ENCODE measurements at regions of chr10 and their contacts with region 1.

Region 1: DNA sequence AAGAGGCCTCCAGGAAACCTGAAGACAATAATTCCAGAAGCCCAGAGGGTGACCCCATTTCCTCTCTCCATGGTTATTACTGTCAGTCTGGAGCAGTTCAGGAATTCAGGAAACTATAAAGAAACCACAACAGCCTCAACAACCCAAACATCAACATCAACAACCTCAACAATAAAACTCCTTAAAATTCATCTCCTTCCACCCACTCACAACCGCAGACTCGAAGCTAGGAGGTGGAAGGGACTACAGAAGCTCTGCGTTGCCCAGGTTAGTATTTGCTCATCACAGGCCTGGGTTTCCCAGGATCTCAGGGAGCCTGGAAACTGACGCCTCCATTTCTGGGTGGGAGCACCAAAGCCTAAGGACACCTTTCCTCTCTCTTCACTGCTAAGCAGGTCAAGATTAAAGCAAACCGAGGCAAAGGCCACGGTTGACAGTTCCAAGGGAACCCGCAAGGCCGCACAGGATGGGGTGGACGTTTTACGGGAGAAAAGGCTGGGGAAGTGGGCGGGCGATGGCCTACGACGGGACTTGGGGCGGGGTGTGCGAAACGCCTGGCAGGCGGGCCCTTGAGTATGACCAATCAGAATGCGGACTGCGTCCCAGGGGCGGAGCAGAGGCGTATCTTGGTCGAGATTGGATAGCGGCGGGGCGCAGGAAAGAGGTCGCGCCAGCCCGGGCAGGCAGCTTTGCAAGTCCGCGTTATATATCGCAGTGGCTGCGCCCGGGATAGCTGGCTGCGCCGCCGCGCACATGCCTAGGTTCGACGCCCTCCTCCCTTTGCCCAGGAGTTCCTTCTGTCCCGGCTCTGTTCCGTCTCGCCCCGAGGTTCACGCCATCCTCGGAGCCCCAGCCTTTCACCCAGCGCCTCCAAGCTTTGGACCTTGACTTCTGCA is at the start of gene ELOVL3:
- DNase-seq: peak; percentile 91
- ATAC-seq: peak; percentile 96
- H3K4me3 Mint-ChIP-seq: peak within 1 kb of the TSS; percentile 32
- H3K27ac Mint-ChIP-seq: no peak within 1 kb of the TSS
- H3K4me1 Mint-ChIP-seq: peaks cover 24% of the 10 kb centered on the region
- H3K27me3 Mint-ChIP-seq: peaks cover 56% of the 10 kb centered on the region
- total RNA-seq, gene ELOVL3: not detected

Region 2: GRCh38 chr10:102114861-102115618 is 110.9 kb before region 1 on chr10:
- CTCF ChIA-PET with region 1: no interaction called
- POLR2A ChIA-PET with region 1: no interaction called
- DNase-seq: peak; percentile 91
- ATAC-seq: peak; percentile 75
- H3K4me3 Mint-ChIP-seq: peak overlapping the region; percentile 91
- H3K27ac Mint-ChIP-seq: peak overlapping the region; percentile 93
- H3K4me1 Mint-ChIP-seq: peaks cover 63% of the 10 kb centered on the region
- H3K27me3 Mint-ChIP-seq: no peaks in the 10 kb centered on the region

Region 3: DNA sequence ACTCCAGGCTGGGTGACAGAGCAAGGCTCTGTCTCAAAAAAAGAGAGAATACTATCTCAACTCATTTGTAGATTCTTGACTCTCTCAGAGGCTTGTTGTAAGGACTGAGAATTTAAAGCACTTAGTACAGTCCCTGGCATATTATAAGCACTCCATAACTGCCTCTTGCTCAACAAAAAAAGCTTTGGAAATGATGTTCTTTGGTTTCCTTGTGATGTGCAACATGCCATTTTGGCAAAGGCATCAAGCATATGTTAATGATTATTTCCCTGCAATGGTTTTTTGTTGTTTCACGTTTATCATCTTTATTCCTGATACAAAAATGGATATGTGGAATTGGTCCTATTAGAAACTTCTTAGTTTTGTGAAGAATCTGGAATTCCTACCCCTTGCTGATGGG is 58.0 kb before region 1 on chr10:
- CTCF ChIA-PET with region 1: interaction called, 105 read pairs
- POLR2A ChIA-PET with region 1: interaction called, 3 read pairs
- DNase-seq: no peak
- ATAC-seq: no peak
- H3K4me3 Mint-ChIP-seq: no peak overlapping the region
- H3K27ac Mint-ChIP-seq: no peak overlapping the region
- H3K4me1 Mint-ChIP-seq: peaks cover 12% of the 10 kb centered on the region
- H3K27me3 Mint-ChIP-seq: no peaks in the 10 kb centered on the region

Region 4: DNA sequence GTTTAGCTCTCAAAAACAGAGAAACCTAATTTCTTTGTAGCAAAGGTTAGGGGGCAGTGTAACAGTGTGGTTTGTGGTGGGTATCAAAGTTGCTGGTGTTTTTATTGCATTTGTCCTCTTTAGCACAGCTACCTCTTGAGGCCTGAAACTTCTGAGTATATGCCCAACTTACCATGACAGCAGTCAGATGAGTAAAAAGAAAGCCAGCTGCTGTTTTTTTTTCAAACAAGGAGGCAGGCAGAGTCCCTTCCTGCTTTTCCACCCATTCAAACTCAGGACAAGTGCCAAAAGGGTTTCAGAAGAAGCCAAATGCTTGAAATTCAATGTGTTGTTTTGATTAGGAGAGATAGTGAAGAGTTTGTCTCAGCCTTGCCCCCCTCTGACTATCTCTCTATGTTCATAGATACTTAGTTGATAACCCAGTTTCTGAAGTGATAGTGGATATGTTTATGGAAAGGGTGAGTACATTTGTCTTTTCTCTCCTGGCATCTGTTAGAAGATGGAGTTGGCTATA is 42.5 kb after region 1 on chr10:
- CTCF ChIA-PET with region 1: interaction called, 52 read pairs
- POLR2A ChIA-PET with region 1: no interaction called
- DNase-seq: no peak
- ATAC-seq: peak; percentile 39
- H3K4me3 Mint-ChIP-seq: no peak overlapping the region
- H3K27ac Mint-ChIP-seq: peak overlapping the region; percentile 19
- H3K4me1 Mint-ChIP-seq: peaks cover 44% of the 10 kb centered on the region
- H3K27me3 Mint-ChIP-seq: no peaks in the 10 kb centered on the region

Region 5: GRCh38 chr10:102342958-102343357 is 117.1 kb after region 1 on chr10:
- CTCF ChIA-PET with region 1: interaction called, 742 read pairs
- POLR2A ChIA-PET with region 1: no interaction called
- DNase-seq: no peak
- ATAC-seq: no peak
- H3K4me3 Mint-ChIP-seq: no peak overlapping the region
- H3K27ac Mint-ChIP-seq: no peak overlapping the region
- H3K4me1 Mint-ChIP-seq: peaks cover 4% of the 10 kb centered on the region
- H3K27me3 Mint-ChIP-seq: no peaks in the 10 kb centered on the region

Region 6: DNA sequence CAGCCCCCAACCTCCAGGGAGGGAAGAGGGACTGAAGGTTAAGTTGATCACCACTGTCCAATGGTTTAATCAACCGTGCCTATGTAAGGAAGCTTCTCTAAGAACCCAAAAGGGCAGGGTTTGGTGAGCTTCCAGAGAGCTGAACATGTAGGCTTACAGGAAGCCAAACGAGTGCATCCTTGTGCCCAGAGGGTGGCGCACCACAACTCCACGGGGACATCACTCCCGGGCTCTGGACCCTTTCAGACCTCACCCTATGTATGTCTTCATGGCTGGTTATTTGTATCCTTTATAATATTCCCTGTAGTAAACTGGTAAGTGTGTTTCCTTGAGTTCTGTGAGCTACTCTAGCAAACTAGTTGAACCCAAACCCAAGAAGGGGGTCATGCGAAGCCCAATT is 158.2 kb after region 1 on chr10:
- CTCF ChIA-PET with region 1: interaction called, 36 read pairs
- POLR2A ChIA-PET with region 1: no interaction called
- DNase-seq: no peak
- ATAC-seq: no peak
- H3K4me3 Mint-ChIP-seq: no peak overlapping the region
- H3K27ac Mint-ChIP-seq: no peak overlapping the region
- H3K4me1 Mint-ChIP-seq: no peaks in the 10 kb centered on the region
- H3K27me3 Mint-ChIP-seq: no peaks in the 10 kb centered on the region

Region 7: DNA sequence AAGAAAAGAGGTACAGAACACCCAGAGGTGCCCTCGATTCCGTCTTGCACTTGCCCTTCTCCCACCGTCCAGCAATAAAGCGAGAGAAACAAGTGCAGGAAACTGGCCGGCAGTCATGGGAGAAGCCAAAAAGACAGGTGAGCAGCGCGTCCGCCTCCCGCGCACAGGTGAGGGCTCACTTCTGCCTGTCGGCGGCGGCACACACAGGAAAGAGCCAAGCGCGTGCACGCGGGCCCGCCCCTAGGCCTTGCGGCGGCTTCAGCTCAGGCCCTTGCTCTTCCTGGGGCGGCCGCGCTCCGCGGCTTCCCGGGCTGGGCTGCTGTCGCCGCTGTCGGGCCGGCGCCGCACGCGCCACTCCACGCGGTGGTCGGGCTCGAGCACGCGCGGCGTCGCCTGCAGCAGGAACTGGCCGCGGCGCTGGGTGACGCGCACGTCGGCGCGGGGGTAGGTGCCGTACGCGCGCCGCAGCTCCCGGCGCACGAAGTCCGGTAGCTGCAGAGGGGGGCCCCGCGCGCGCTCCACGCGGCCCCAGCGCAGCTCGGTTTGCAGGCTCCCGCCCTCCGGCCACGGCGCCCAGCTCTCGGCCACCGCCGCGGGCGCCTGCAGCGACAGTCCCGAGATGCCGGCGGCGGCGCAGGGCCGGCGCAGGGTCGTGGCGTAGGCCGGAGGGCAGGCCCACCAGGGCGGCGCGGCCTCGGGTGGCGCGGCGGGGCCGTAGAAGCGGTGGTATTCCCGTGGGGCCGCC is 224.5 kb after region 1 on chr10:
- CTCF ChIA-PET with region 1: interaction called, 14 read pairs
- POLR2A ChIA-PET with region 1: no interaction called
- DNase-seq: peak; percentile 93
- ATAC-seq: peak; percentile 85
- H3K4me3 Mint-ChIP-seq: peak overlapping the region; percentile 90
- H3K27ac Mint-ChIP-seq: peak overlapping the region; percentile 93
- H3K4me1 Mint-ChIP-seq: peaks cover 47% of the 10 kb centered on the region
- H3K27me3 Mint-ChIP-seq: no peaks in the 10 kb centered on the region

Region 8: DNA sequence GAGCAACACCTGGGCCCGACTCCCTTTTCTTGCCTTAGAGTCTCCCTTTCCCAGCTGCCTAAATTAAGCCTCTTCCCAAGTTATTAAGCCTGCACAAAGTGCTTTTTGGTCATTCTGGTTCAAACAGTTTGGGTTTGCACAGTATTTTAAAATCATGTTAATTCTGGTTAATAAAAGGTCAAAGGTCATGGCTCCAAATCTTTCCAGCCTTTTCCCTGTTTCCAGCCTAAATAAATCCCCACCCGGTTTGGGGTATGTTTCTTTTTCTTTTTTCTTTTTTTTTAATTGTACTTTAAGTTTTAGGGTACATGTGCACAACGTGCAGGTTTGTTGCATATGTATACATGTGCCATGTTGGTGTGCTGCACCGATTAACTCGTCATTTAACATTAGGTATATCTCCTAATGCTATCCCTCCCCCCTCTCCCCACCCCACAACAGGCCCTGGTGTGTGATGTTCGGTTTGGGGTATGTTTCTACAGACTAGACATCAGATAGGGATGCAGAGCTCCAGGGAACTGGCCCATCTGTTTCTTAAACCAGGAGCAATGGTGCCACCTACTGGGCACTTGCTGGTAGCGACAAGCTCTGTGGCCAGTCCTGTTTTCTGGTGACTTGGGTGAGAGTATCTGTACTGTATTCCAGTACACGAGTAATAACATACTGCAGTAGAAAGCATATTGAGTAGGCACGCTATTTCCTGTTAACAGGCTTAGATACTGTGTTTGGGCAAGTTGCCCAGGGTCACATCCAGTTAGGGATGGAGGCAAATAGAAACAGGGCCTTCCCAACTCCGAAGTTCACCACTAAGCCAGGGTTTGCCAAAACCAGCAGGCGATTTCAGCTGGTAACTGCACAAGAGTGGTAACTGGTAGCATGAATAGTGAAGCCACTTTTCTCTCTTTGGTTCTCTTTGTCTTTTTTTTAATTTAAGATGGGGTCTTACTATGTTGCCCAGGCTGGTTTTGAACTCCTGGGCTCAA is 357.8 kb after region 1 on chr10:
- CTCF ChIA-PET with region 1: interaction called, 35 read pairs
- POLR2A ChIA-PET with region 1: no interaction called
- DNase-seq: peak; percentile 90
- ATAC-seq: peak; percentile 99
- H3K4me3 Mint-ChIP-seq: no peak overlapping the region
- H3K27ac Mint-ChIP-seq: peak overlapping the region; percentile 20
- H3K4me1 Mint-ChIP-seq: no peaks in the 10 kb centered on the region
- H3K27me3 Mint-ChIP-seq: no peaks in the 10 kb centered on the region